ENCODE measurements at regions of chr22 and their contacts with region 1.

Region 1: DNA sequence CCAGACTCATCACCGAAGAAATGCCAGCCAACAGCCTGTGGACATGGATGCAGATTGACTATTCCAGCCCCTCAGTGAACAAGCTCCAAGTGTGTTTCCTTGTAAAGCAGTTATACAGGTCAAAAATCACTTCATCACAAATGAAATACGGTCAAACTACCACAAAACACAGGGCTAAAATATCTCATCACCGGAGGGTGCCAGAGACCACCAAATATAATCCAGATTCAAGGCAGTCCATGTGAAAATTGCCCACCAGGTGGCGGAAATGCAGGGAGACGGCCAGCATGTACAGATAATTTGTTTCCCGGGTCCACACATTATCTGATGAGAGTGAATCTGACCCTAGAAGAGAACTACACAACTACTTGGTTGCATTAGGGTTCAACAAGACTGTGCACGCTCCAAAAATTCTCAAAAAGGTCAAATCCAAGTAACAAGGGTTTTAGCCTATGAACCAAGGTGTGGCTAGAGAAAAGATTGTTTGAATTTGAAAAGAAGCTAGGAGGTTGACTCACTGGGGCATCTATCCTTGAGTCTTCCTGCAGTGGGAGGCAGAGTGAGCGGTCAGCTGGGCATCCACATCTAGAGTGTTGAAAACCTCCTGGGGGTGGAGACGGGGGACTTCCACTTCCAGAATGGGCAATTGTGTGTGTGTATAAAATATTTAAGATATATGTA is 71.7 kb downstream of the IGLL5 start:
- DNase-seq: peak; percentile 72 to 94 (median 85)
- H3K4me3 ChIP-seq: no peak overlapping the region
- H3K27ac ChIP-seq: no peak overlapping the region
- H3K27me3 ChIP-seq: peaks cover 0 to under 1% (median 0%) of the 10 kb centered on the region in 45 donors
- CTCF ChIP-seq: peak; percentile 96 to 100 (median 99)

Region 2: DNA sequence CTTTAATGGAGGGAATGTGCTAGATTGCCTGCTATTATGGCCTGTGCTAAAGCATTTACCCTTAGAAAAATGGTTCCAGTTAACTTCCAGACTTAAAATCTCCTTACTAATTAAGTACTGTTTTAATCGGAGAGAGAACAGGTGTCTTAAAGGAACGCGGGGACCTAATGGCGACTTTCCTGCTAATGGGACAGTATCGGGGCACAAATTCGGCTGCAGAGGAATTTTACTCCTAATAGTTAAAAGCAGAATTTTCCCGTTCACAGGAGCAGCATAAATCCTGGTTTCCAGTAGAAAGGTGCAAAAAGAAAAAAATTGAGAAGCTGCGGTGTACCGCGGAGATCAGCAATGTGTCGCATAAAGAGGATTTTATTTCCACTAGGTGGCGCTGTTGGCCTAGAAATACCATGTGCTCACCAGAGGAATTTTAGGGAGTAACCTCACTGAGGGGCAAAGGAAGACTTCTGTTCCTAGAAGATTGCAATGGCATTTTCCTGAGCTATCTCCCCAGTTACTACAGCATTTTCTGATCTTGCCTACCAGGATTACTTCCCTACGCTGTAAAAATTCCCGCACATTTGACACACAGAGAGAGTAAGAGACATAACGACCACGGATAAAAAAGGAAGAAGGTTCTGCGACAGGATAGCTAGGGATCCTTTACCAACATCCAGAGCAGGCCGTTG is 495.3 kb before region 1 on chr22:
- intact Hi-C with region 1: loop called in 1 of 2 experiments (anchors 2 kb)
- DNase-seq: peak in 6 of 10 donors; percentile 36 to 69 (median 47)
- H3K4me3 ChIP-seq: peak overlapping the region in 13 of 59 donors; percentile 9 to 49 (median 28)
- H3K27ac ChIP-seq: no peak overlapping the region
- H3K27me3 ChIP-seq: peaks cover 0 to 18% (median 0%) of the 10 kb centered on the region in 45 donors
- CTCF ChIP-seq: peak; percentile 78 to 96 (median 90)

Region 3: DNA sequence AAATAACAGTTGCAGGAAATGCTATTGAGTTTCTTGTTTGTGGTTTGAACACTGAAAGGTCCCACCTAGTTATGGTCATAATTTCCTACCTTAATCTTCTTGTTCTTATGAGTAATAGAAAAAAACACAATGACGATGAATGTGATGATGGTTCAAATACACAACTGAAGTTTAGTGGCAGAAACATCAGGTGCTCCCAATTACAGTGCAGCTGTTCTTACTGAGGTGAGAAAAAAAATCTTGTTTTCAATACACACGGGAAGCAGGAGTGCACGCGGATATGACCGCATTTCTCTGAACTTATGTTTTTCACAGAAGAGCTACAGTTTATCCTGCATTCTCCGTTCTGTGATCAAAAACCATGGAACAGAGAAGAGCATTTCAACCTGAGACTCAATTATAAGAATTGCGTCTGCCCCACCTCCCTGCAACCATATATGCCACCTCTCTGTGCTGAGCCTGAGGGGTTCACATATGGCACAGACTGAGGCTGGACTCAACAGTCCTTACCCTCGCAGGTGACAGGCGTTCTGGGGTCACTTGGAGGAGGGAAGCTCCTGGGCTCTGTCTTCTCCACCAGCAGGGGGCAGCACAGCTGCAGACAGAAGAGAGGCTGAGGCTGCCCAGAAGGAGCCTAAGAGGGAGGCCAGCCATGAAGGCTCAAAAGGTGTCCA is 171.4 kb before region 1 on chr22:
- intact Hi-C with region 1: loop called in 1 of 2 experiments (anchors 10 kb)
- DNase-seq: peak in 5 of 10 donors; percentile 16 to 61 (median 39)
- H3K4me3 ChIP-seq: no peak overlapping the region
- H3K27ac ChIP-seq: no peak overlapping the region
- H3K27me3 ChIP-seq: peaks cover 0 to 16% (median 0%) of the 10 kb centered on the region in 45 donors
- CTCF ChIP-seq: peak in 55 of 56 donors; percentile 28 to 77 (median 66)

Region 4: GRCh38 chr22:23069502-23070357 is 110.4 kb after region 1 on chr22:
- intact Hi-C with region 1: loop called (anchors 2 to 5 kb)
- DNase-seq: peak; percentile 91 to 98 (median 95)
- H3K4me3 ChIP-seq: peak overlapping the region; percentile 46 to 89 (median 75)
- H3K27ac ChIP-seq: peak overlapping the region in 52 of 59 donors; percentile 7 to 91 (median 72)
- H3K27me3 ChIP-seq: no peaks in the 10 kb centered on the region
- CTCF ChIP-seq: peak in 24 of 56 donors; percentile 5 to 41 (median 17)

Region 5: GRCh38 chr22:23281406-23282088 is 322.3 kb after region 1 on chr22:
- intact Hi-C with region 1: loop called (anchors 5 kb)
- DNase-seq: peak; percentile 84 to 92 (median 91)
- H3K4me3 ChIP-seq: peak overlapping the region in 3 of 59 donors; percentile 9 to 17 (median 13)
- H3K27ac ChIP-seq: peak overlapping the region in 52 of 59 donors; percentile 2 to 85 (median 68)
- H3K27me3 ChIP-seq: no peaks in the 10 kb centered on the region
- CTCF ChIP-seq: peak; percentile 85 to 99 (median 97)

Region 6: DNA sequence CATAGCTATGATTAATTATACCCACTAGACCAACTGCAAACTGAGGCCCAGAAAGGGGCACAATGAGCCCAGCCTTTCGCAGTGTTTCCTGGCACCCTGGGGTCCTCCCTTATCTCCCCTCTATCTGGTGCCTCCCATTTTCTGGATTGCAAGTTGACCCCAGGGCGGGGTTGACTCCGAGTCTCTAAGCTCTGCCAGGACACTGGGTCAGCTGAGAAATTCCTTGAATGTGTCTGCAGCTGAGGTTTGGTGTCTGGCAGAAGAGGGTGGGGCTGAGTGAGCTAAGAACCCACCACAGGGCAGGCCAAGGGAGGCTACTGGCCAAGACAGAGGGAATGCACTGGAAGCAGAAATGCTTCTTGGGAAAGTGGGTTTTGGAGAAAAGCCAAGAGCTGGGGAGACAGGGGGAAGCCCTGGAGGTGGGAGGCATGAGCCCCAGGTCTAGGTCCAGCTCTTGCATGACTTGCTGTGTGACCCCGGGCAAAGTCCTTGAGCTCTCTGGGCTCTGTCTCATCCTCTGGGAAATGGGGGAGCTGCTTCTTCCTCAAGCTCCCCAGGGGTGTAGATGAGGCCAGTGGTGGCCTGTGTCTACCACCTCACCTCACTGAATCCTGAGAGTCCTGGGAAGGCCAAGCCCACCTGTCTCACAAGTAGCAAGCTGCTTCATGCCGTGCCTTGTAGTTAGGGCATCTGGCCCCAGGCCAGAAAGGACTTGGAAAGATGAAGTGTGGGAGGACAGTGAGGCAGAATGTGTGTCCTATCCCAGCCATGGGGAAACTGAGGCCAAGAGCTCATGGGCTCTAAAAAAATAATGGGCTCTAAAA is 815.7 kb after region 1 on chr22:
- intact Hi-C with region 1: loop called in 1 of 2 experiments (anchors 5 kb)
- DNase-seq: no peak
- H3K4me3 ChIP-seq: no peak overlapping the region
- H3K27ac ChIP-seq: no peak overlapping the region
- H3K27me3 ChIP-seq: no peaks in the 10 kb centered on the region
- CTCF ChIP-seq: no peak